Left ventricle myocardium inferior (tissue), 1 donor: ENCODE measurements at regions of chr19 and their contacts with region 1.

Region 1: GRCh38 chr19:58157045-58157728 is 6.6 kb upstream of the ZNF329 start:
- DNase-seq: no peak
- H3K4me3 ChIP-seq: no peak overlapping the region
- H3K27ac ChIP-seq: no peak overlapping the region
- H3K4me1 ChIP-seq: peaks cover 33% of the 10 kb centered on the region
- H3K27me3 ChIP-seq: no peaks in the 10 kb centered on the region
- CTCF ChIP-seq: no peak

Region 2: GRCh38 chr19:57566396-57567265 is 590.6 kb before region 1 on chr19:
- intact Hi-C with region 1: no loop called
- DNase-seq: no peak
- H3K4me3 ChIP-seq: no peak overlapping the region
- H3K27ac ChIP-seq: no peak overlapping the region
- H3K4me1 ChIP-seq: no peaks in the 10 kb centered on the region
- H3K27me3 ChIP-seq: no peaks in the 10 kb centered on the region
- CTCF ChIP-seq: no peak

Region 3: DNA sequence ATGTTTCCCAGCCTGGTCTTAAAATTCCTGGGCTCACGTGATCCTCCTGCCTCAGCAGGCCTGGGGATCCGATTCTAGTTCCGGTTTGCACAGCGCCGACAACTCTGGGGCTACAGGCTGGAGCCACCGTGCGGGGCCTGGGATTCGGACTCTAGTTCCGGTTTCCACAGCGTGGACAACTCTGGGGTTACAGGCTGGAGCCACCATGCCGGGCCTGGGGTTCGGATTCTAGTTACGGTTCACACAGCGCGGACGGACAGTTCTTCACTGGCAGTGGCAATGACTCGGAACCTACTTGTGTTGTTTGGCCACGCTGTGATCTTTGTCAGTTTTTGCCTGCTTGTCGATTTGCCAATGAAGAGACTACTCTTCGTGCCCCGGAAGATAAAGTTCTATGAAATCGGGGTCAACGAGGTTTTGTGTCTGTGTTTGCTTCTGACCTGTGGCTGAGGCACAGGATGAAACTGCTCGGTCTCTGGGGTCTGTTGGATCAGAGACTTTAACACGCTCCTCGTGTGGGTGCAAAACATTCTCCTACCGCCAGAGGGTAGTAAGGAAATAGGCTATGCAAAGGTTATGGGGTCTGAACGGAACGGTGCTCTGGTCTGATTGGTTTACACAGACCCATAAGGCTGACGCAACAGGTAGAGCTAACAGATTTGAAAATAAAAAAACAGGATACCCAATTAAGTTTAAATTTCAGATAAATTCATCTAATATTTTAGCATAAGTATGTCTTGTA is 135.5 kb before region 1 on chr19:
- intact Hi-C with region 1: loop called (anchors 2 kb)
- DNase-seq: no peak
- H3K4me3 ChIP-seq: no peak overlapping the region
- H3K27ac ChIP-seq: no peak overlapping the region
- H3K4me1 ChIP-seq: peaks cover 6% of the 10 kb centered on the region
- H3K27me3 ChIP-seq: peaks cover 13% of the 10 kb centered on the region
- CTCF ChIP-seq: peak; percentile 86